ENCODE measurements at regions of chr9 and their contacts with region 1.

Region 1: DNA sequence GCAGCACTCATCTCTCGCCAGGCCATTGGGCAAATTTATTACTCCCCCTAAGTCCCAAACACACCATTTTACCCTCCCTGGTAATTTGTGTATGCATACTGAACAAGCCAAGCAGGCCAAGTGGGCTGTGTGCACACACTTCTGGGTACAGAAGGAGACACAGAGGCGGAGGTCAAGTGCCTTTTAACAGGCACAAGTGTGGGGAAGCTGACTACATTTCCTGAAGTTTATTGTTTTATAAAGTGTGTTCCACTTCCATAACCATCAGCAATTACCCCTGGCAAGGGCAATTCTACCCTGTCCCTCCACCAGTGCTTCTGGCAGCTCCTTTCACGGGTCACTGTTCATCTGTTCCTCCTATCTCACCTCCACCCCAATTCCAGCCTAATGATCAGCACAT is 93.9 kb downstream of the SETX start:
- DNase-seq: no peak
- H3K4me3 ChIP-seq: no peak overlapping the region
- H3K27ac ChIP-seq: no peak overlapping the region
- H3K4me1 ChIP-seq: no peaks in the 10 kb centered on the region
- H3K27me3 ChIP-seq: no peaks in the 10 kb centered on the region
- CTCF ChIP-seq: no peak

Region 2: GRCh38 chr9:131781069-131781468 is 479.8 kb before region 1 on chr9:
- CTCF ChIA-PET with region 1: interaction called, 14 read pairs
- POLR2A ChIA-PET with region 1: no interaction called
- intact Hi-C with region 1: no loop called
- DNase-seq: no peak
- H3K4me3 ChIP-seq: no peak overlapping the region
- H3K27ac ChIP-seq: no peak overlapping the region
- H3K4me1 ChIP-seq: no peaks in the 10 kb centered on the region
- H3K27me3 ChIP-seq: peaks cover 87% of the 10 kb centered on the region
- CTCF ChIP-seq: no peak

Region 3: GRCh38 chr9:132006677-132007370 is 254.0 kb before region 1 on chr9:
- CTCF ChIA-PET with region 1: no interaction called
- POLR2A ChIA-PET with region 1: no interaction called
- intact Hi-C with region 1: no loop called
- DNase-seq: no peak
- H3K4me3 ChIP-seq: no peak overlapping the region
- H3K27ac ChIP-seq: no peak overlapping the region
- H3K4me1 ChIP-seq: peaks cover 22% of the 10 kb centered on the region
- H3K27me3 ChIP-seq: no peaks in the 10 kb centered on the region
- CTCF ChIP-seq: no peak

Region 4: DNA sequence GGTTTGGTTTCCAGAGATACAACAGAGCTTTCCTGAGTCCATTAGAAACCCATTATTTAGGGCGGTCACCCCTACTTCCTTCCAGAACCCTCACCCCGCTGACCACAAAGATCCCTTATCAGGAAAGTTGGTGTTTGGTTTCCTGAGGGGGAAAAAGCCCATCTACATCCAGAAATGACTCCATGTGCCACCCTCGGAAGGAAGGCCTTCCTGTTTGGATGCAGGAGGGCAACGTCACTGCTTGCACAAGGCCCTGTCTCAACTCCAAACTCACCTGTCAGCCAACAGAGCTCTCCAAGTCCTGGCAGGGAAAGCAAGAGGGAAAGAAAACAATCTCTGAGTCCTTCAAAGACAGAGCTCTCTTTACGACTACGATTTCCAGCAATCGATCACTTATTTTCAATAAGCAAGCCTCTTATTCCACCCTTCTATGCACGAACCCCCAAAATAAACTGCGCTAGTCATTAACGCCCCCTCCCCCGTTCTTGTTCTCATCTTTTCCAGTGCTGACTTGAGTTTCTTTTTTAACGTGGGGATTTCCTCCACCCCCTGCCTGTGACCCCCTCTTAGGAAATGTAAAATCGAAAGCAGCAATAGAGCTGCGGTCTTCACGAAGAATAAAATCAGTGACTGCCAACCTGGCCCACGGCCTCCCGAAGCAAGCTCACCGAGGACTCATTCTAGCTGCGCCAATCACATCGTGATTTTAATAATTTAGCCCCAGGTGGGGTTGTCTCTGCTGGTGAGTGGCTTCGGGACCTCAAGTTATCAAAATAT is 134.7 kb before region 1 on chr9:
- CTCF ChIA-PET with region 1: no interaction called
- POLR2A ChIA-PET with region 1: no interaction called
- intact Hi-C with region 1: no loop called
- DNase-seq: no peak
- H3K4me3 ChIP-seq: no peak overlapping the region
- H3K27ac ChIP-seq: no peak overlapping the region
- H3K4me1 ChIP-seq: no peaks in the 10 kb centered on the region
- H3K27me3 ChIP-seq: peaks cover 99% of the 10 kb centered on the region
- CTCF ChIP-seq: no peak